ENCODE measurements at regions of chr1 and their contacts with region 1.

Region 1: DNA sequence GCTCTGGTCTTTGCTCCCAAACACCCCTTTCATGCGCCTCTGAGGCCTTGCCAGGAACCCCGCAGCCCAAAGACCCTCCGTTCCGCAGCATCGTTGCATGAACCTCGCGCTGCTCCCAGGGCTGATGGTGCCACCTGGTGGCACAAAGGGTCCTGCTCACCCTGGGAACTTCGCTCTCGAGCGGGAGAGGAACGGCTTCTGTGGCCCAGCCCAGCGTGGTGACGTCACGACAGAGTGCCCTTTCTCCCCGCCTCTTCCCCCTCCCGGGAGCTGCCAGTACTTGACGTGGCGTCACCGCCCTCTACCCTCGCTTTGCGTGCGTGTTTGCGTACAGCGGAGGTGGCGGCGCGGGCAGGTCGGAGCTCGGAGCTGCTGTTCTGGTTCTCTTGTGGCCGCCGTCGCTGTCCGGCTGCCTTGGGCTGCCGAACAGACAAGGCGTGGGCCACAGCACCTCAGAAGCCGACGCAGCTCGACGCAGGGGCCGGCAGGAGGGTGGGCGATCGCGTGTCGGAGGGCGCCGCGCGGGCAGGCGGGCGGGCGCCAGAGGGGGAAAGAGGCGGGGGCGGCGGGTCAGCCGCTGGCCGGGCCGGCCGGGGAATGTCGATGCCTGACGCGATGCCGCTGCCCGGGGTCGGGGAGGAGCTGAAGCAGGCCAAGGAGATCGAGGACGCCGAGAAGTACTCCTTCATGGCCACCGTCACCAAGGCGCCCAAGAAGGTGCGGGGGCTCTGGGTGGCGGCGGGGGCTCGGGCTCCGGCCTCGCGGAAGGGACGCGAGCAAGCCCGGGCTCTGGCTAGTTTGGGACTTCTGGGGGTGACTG is at the start of gene AHCYL1:
- DNase-seq: peak; percentile 100
- CTCF ChIP-seq: peak; percentile 96

Region 2: GRCh38 chr1:109630081-109630897 is 354.4 kb before region 1 on chr1:
- CTCF ChIA-PET with region 1: interaction called, 22 read pairs
- POLR2A ChIA-PET with region 1: no interaction called
- DNase-seq: peak; percentile 59
- CTCF ChIP-seq: peak; percentile 29

Region 3: GRCh38 chr1:109649491-109649914 is 335.2 kb before region 1 on chr1:
- CTCF ChIA-PET with region 1: interaction called, 22 read pairs
- POLR2A ChIA-PET with region 1: no interaction called
- DNase-seq: no peak
- CTCF ChIP-seq: peak; percentile 16

Region 4: GRCh38 chr1:109790735-109791494 is 193.8 kb before region 1 on chr1:
- CTCF ChIA-PET with region 1: interaction called, 53 read pairs
- POLR2A ChIA-PET with region 1: interaction called, 3 read pairs
- DNase-seq: peak; percentile 85
- CTCF ChIP-seq: peak; percentile 53

Region 5: GRCh38 chr1:109906160-109906838 is 78.4 kb before region 1 on chr1:
- CTCF ChIA-PET with region 1: interaction called, 18 read pairs
- POLR2A ChIA-PET with region 1: no interaction called
- DNase-seq: peak; percentile 89
- CTCF ChIP-seq: no peak

Region 6: GRCh38 chr1:109959974-109960744 is 24.5 kb before region 1 on chr1:
- CTCF ChIA-PET with region 1: interaction called, 11 read pairs
- POLR2A ChIA-PET with region 1: no interaction called
- DNase-seq: no peak
- CTCF ChIP-seq: no peak

Measured in GM10248 (cell line).